Gastrocnemius medialis (tissue), 4 donors: ENCODE measurements at regions of chr18 and their contacts with region 1.

Region 1: GRCh38 chr18:74353169-74353775 is 37.6 kb downstream of the C18orf63 start:
- DNase-seq: peak; percentile 21 to 24
- ATAC-seq: peak in 1 of 2 donors; percentile 70
- H3K4me3 ChIP-seq: no peak overlapping the region
- H3K27ac ChIP-seq: no peak overlapping the region
- H3K4me1 ChIP-seq: no peaks in the 10 kb centered on the region
- H3K27me3 ChIP-seq: no peaks in the 10 kb centered on the region
- CTCF ChIP-seq: peak; percentile 12 to 60 (median 48)
- POLR2A ChIP-seq: no peak

Region 2: DNA sequence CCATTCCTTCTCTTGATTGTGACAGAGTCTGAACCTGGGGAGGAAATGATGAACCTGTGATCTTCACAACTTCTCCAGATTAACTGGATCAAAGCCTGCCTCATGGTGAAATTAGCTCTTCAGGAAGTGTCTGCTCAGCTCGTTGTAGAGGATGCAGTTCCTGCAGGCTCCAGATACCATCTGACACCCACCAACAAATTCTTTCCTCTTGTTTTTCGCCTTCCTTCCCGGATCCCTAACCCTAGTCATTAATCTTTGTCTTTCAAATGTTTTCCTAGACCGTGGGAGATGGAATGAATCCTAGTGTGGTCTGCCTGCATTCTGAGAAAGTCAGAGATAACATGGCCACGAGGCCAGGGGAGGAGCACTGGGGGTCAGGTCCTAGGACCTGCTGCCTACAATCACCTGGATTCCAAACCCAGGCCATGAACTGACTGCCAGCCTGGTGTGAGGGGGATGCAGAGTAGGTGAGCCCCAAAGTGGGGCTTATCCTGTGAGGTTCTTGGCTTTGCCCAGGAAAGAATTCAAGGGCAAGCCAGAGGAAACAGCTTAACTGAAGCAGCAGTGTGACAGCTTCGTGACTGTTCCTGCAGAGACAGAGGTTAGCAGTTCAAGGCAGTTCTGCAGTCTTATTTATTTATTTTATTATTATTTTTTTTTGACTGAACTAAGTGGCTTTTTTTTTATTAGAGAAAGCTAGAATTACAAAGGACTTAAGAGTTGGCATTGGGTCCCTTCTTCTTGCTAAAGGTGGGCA is 36.1 kb after region 1 on chr18:
- in situ Hi-C with region 1: no loop called
- intact Hi-C with region 1: no loop called
- DNase-seq: no peak
- ATAC-seq: no peak
- H3K4me3 ChIP-seq: no peak overlapping the region
- H3K27ac ChIP-seq: no peak overlapping the region
- H3K4me1 ChIP-seq: no peaks in the 10 kb centered on the region
- H3K27me3 ChIP-seq: no peaks in the 10 kb centered on the region
- CTCF ChIP-seq: no peak
- POLR2A ChIP-seq: no peak

Region 3: GRCh38 chr18:74446178-74446577 is 92.9 kb after region 1 on chr18:
- in situ Hi-C with region 1: no loop called
- intact Hi-C with region 1: no loop called
- DNase-seq: no peak
- ATAC-seq: no peak
- H3K4me3 ChIP-seq: no peak overlapping the region
- H3K27ac ChIP-seq: no peak overlapping the region
- H3K4me1 ChIP-seq: no peaks in the 10 kb centered on the region
- H3K27me3 ChIP-seq: no peaks in the 10 kb centered on the region
- CTCF ChIP-seq: no peak
- POLR2A ChIP-seq: no peak

Region 4: DNA sequence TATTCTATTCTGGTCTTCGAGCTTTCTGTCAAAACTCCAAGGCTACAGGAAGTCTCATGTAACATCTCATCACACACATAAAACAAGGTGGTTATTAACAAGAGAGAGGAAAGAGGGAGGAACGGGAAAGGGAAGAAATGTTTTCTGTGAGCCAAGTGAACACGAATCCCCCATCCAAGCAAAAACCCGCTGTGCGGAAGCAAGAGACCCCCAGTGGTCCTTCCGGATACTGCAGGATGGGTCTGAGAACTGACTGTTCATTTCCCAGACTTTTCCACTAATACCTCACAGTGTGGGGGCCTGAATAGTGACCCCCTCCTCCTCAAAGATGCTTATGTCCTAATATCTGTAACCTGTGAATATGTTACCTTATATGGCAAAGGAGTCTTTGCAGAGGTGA is 122.9 kb after region 1 on chr18:
- in situ Hi-C with region 1: loop called in 1 of 4 experiments (anchors 10 kb)
- intact Hi-C with region 1: loop called (anchors 5 kb)
- DNase-seq: no peak
- ATAC-seq: no peak
- H3K4me3 ChIP-seq: no peak overlapping the region
- H3K27ac ChIP-seq: no peak overlapping the region
- H3K4me1 ChIP-seq: no peaks in the 10 kb centered on the region
- H3K27me3 ChIP-seq: no peaks in the 10 kb centered on the region
- CTCF ChIP-seq: peak in 3 of 5 experiments; percentile 23 to 60 (median 48)
- POLR2A ChIP-seq: no peak

Region 5: DNA sequence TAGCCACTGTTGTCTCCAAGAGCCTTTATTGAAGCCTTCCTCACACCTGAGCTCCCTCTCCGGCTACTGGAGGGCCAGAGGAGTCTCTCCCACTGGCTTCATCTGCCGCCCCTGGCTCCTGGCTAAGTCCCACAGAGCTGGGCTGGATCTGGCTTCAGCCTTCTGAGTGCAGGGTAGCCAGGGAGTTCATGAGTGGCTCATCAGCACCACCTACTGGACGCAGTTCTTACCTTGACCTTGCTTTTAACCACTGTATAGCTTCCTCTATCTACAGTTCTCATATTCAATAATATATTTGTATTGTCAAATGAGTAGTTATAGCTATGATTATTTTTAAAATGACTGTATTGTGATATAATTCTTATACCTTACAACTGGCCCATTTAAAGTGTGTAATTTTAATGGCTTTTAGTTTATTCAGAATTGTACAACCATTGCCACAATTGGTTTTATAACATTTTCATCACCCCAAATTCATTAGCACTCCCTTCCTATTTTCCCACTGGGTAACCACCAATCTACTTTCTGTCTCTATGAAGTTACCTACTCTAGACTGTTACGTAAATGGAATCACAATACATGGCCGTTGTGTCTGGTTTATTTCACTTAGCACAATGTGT is 198.8 kb after region 1 on chr18:
- in situ Hi-C with region 1: loop called (anchors 5 to 10 kb)
- intact Hi-C with region 1: loop called (anchors 5 kb)
- DNase-seq: peak; percentile 40 to 60
- ATAC-seq: peak; percentile 93 to 95
- H3K4me3 ChIP-seq: no peak overlapping the region
- H3K27ac ChIP-seq: no peak overlapping the region
- H3K4me1 ChIP-seq: peaks cover 0 to 6% of the 10 kb centered on the region in 2 donors
- H3K27me3 ChIP-seq: no peaks in the 10 kb centered on the region
- CTCF ChIP-seq: peak; percentile 48 to 79 (median 68)
- POLR2A ChIP-seq: no peak

Region 6: GRCh38 chr18:74773171-74773624 is 419.9 kb after region 1 on chr18:
- in situ Hi-C with region 1: no loop called
- intact Hi-C with region 1: no loop called
- DNase-seq: no peak
- ATAC-seq: no peak
- H3K4me3 ChIP-seq: no peak overlapping the region
- H3K27ac ChIP-seq: no peak overlapping the region
- H3K4me1 ChIP-seq: peaks cover 0 to 1% of the 10 kb centered on the region in 2 donors
- H3K27me3 ChIP-seq: no peaks in the 10 kb centered on the region
- CTCF ChIP-seq: no peak
- POLR2A ChIP-seq: no peak